ENCODE measurements at regions of chr1 and their contacts with region 1.

Region 1: GRCh38 chr1:204602871-204603542 is 82.5 kb downstream of the LRRN2 start:
- DNase-seq: peak; percentile 18

Region 2: DNA sequence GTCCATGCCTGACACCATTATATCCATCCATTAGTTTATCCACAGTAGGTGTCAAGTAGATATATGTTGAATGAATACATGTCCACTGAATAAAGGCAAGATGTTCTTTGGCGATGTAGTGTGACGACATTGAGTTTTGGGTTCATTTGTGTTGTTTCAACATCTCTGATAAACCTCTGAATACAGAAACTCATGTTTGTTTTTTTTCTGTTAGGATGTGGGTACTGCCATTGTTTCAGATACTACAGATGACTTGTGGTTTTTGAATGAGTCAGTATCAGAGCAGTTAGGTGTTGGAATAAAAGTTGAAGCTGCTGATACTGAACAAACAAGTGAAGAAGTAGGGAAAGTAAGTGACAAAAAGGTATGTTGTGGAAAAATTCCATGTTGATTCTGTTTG is 58.7 kb before region 1 on chr1:
- intact Hi-C with region 1: no loop called
- DNase-seq: no peak

Region 3: DNA sequence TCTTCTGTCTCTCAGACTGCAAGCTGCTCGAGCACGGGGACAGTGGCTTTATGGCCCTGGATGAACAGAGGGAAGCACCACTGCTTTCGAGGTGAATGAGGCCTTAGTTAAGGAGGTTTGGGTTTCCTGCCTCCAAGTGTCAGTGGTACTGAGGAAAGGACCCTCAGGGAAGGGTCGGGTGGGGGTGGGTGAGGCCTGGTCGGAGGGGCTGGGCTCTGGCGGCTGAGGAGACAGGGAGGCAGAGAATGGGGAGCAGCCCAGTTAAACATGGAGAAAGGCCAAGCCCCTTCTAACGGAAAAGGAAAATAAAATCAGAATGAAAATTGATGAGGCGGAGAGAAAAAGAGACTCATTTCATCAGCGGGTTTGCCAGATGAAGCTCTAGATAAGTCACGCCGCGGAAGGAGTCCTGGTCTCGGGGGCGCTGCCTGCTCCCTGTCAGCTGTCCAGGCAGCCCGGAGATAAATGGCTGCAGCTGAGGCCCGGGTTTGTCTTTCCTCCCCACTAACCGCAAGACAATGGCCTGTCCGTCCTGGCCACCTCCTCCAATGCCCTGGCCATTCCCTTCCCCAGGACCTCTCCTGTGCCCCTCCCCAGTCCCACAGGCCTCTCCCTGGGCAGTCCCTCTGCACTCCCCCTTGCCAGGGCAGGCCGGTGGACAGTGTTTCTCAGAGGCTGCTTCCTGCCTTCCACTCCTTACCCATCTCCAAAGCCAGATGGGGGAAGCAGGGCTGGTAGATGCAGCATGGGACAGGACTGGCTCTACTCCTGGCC is 27.3 kb after region 1 on chr1:
- intact Hi-C with region 1: loop called in 1 of 2 experiments (anchors 1 kb)
- DNase-seq: no peak

Region 4: GRCh38 chr1:204640578-204640977 is 37.6 kb after region 1 on chr1:
- intact Hi-C with region 1: no loop called
- DNase-seq: no peak

Measured in posterior vena cava (tissue), 2 donors.